ENCODE measurements at regions of chr11 and their contacts with region 1.

Region 1: GRCh38 chr11:94171693-94172440 is 43.2 kb downstream of the PANX1 start:
- DNase-seq: peak; percentile 36 to 83
- H3K4me3 ChIP-seq: no peak overlapping the region
- H3K27ac ChIP-seq: no peak overlapping the region
- H3K4me1 ChIP-seq: peaks cover 3 to 14% (median 5%) of the 10 kb centered on the region in 4 experiments; a peak in 4 of 7 replicates
- H3K27me3 ChIP-seq: no peaks in the 10 kb centered on the region
- CTCF ChIP-seq: peak; percentile 67 to 79 (median 78)
- EP300 ChIP-seq: no peak
- POLR2A ChIP-seq: no peak
- RAD21 ChIP-seq: peak; percentile 74 to 80

Region 2: GRCh38 chr11:94134651-94135512 is 37.0 kb before region 1 on chr11:
- CTCF ChIA-PET with region 1: interaction called, 19 read pairs
- POLR2A ChIA-PET with region 1: interaction called, 4 read pairs
- DNase-seq: no peak
- H3K4me3 ChIP-seq: no peak overlapping the region
- H3K27ac ChIP-seq: no peak overlapping the region
- H3K4me1 ChIP-seq: peaks cover 10 to 33% (median 20%) of the 10 kb centered on the region in 4 experiments
- H3K27me3 ChIP-seq: no peaks in the 10 kb centered on the region
- CTCF ChIP-seq: no peak
- EP300 ChIP-seq: no peak
- POLR2A ChIP-seq: no peak
- RAD21 ChIP-seq: no peak

Region 3: DNA sequence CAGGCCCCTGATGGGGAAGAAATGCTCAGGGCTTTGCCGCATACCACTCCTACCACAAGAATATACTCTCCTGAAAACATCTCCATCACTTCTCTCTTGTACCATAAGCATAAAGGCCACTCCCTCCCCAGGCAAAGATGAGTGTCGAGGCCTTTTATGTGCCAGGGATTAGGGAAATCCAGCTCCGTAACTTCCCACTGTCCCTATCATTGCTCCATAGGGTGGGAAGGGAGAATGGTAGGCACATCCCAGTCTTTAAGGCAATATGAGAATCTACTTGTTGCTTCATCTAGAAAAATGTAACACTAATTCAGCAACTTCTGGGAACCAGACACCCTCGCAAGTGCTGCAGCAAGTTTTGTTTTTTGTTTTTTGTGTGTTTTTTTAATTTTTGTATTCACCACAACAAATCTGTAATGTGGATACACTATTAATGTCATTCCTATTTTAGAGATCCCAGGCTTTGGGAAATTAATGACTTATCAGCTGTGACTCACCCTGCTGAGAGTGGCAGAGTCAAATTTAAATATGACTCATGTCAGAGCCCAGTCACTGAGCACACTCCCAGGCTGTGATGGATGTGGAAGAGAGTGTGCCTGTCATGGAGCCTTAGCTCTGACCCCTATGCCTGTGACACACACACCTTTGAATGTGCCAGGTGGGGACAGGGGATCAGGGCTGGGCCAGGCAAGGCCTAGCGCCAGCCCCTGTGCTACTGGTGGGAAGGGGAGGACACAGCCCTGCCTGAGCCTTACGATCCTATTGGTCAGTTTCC is 19.8 kb before region 1 on chr11:
- CTCF ChIA-PET with region 1: interaction called, 13 read pairs
- POLR2A ChIA-PET with region 1: no interaction called
- DNase-seq: no peak
- H3K4me3 ChIP-seq: no peak overlapping the region
- H3K27ac ChIP-seq: no peak overlapping the region
- H3K4me1 ChIP-seq: peaks cover 10 to 22% (median 16%) of the 10 kb centered on the region in 4 experiments
- H3K27me3 ChIP-seq: no peaks in the 10 kb centered on the region
- CTCF ChIP-seq: no peak
- EP300 ChIP-seq: no peak
- POLR2A ChIP-seq: no peak
- RAD21 ChIP-seq: no peak

Region 4: GRCh38 chr11:94433049-94433448 is 261.2 kb after region 1 on chr11:
- CTCF ChIA-PET with region 1: no interaction called
- POLR2A ChIA-PET with region 1: no interaction called
- DNase-seq: no peak
- H3K4me3 ChIP-seq: no peak overlapping the region
- H3K27ac ChIP-seq: no peak overlapping the region
- H3K4me1 ChIP-seq: peaks cover 0 to 11% (median 5%) of the 10 kb centered on the region in 4 experiments; a peak in 4 of 7 replicates
- H3K27me3 ChIP-seq: no peaks in the 10 kb centered on the region
- CTCF ChIP-seq: no peak
- EP300 ChIP-seq: no peak
- POLR2A ChIP-seq: no peak
- RAD21 ChIP-seq: no peak

Region 5: DNA sequence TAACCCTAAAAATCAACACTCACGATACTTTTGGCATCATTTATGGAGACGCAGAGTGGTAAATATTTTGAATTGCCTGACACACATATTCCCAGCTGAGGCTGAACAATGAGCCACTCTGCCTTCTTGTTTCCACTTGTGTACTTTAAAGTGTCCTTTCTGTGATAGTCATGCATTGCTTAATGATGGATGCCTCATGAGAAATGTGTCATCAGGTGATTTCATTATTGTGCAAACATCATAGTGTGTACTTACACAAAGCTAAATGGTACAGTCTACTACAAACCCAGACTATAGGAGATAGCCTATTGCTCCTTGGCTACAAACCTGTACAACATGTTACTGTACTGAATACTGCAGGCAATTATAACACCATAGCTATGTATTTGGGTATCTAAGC is 277.6 kb after region 1 on chr11:
- CTCF ChIA-PET with region 1: no interaction called
- POLR2A ChIA-PET with region 1: no interaction called
- DNase-seq: no peak
- H3K4me3 ChIP-seq: no peak overlapping the region
- H3K27ac ChIP-seq: no peak overlapping the region
- H3K4me1 ChIP-seq: no peaks in the 10 kb centered on the region
- H3K27me3 ChIP-seq: no peaks in the 10 kb centered on the region
- CTCF ChIP-seq: no peak
- EP300 ChIP-seq: no peak
- POLR2A ChIP-seq: no peak
- RAD21 ChIP-seq: no peak